Mammary epithelial cell (primary cell): ENCODE measurements at regions of chr22 and their contacts with region 1.

Region 1: DNA sequence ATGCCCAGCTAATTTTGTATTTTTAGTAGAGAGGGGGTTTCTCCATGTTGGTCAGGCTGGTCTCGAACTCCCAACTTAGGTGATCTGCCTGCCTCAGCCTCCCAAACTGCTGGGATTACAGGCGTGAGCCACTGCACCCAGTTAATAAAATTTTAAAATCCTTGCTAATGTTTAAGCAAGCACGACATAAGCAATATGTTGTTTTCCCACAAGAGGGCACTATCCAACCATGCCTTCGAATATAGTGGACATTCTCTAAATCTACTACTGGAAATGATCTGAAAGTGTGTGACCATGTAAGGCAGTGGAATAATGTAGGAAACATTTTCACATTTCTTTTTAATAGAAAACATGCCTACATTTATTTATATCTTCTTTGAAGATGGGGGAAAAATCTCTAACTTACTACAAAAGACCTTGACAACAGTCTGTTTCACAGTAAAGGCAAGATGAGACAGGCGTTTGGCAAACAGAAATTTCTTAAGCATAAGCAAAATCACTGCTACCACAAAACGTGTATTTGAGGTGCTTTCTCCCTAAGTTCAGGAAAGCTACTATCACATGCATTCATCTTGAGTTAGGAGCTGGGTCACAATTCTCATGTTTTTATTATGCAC is 38.2 kb downstream of the PITPNB start:
- DNase-seq: peak; percentile 54
- H3K4me3 ChIP-seq: no peak overlapping the region
- H3K27ac ChIP-seq: no peak overlapping the region
- H3K4me1 ChIP-seq: peaks cover 24% of the 10 kb centered on the region
- H3K27me3 ChIP-seq: no peaks in the 10 kb centered on the region
- CTCF ChIP-seq: peak; percentile 68 to 73

Region 2: DNA sequence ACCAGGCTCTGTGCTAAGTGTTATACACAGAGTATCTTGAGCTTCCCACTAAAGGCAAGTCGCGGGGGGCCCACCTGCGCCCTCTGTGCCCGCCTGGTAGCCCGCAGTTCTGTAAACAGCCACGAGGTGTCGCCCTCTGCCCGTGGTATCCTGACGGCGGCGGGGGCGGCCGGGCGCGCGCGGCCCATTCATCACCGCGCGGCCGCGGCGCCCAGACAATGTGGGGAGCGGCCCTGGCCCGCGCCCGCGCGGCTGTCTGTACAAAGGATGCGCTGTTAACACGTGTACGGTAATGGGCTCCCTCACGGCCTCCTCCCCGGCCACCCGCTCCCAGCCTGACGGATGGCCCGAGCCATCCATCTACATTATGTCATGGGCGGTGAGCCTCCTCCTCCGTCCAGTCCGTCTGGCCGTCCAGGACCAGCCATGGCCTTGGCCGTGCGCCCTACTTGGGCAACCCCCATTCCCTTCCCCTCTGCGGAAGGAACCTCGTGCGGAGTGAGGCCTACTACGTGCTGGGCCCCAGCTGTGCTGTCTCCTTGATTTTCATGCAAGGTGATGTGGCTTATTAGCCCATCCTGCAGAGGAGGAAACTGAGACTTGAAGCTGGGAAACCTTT is 1124.1 kb before region 1 on chr22:
- CTCF ChIA-PET with region 1: no interaction called
- dilution Hi-C with region 1: no loop called
- in situ Hi-C with region 1: no loop called
- intact Hi-C with region 1: loop called (anchors 1 kb)
- DNase-seq: peak; percentile 36
- H3K4me3 ChIP-seq: peak overlapping the region in 1 of 3 experiments; percentile 36
- H3K27ac ChIP-seq: no peak overlapping the region
- H3K4me1 ChIP-seq: peaks cover 3% of the 10 kb centered on the region
- H3K27me3 ChIP-seq: no peaks in the 10 kb centered on the region
- CTCF ChIP-seq: peak; percentile 48 to 72

Region 3: GRCh38 chr22:27588268-27588667 is 292.6 kb before region 1 on chr22:
- CTCF ChIA-PET with region 1: no interaction called
- dilution Hi-C with region 1: no loop called
- in situ Hi-C with region 1: no loop called
- intact Hi-C with region 1: no loop called
- DNase-seq: no peak
- H3K4me3 ChIP-seq: no peak overlapping the region
- H3K27ac ChIP-seq: no peak overlapping the region
- H3K4me1 ChIP-seq: peaks cover 3% of the 10 kb centered on the region
- H3K27me3 ChIP-seq: no peaks in the 10 kb centered on the region
- CTCF ChIP-seq: no peak

Region 4: GRCh38 chr22:27718186-27719032 is 162.5 kb before region 1 on chr22:
- CTCF ChIA-PET with region 1: no interaction called
- dilution Hi-C with region 1: no loop called
- in situ Hi-C with region 1: no loop called
- intact Hi-C with region 1: loop called (anchors 5 kb)
- DNase-seq: peak; percentile 96
- H3K4me3 ChIP-seq: no peak overlapping the region
- H3K27ac ChIP-seq: peak overlapping the region; percentile 84
- H3K4me1 ChIP-seq: peaks cover 36% of the 10 kb centered on the region
- H3K27me3 ChIP-seq: no peaks in the 10 kb centered on the region
- CTCF ChIP-seq: no peak

Region 5: DNA sequence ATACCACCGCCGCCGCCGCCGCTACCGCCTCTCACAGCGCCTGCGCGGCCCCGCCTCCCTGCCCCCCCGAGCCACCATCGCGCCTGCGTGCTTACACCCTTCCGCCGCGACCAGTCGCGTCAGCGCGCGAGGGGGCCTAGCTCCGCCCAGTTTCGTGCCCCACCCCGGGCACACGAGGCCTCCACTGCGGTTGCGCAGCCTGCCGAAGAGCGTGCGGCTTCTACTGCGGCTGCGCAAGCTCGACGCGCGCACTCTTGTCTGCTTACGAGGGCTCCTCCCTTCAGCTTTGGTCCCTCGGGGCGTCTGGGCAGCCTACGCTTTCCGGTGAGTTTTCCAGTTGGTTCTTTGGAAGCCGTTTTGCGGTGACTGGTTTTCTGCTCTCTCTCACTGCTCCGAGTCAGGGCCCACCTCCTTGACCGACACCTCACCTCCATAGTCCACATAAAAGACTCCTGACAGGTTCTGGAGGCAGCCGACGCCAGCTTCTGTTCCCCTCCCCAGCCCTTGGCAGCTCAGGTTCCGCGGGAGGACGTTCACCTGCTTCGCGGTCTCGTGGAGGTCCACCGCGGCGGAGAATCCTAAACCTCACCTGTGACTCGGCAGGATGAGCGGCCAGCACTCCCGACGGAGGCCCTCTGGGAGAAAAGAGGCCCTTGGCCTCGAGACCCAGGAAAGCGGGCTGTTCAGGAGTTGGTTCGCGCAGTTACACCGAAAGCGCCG is 38.5 kb after region 1 on chr22 and contains the start of gene PITPNB:
- CTCF ChIA-PET with region 1: no interaction called
- dilution Hi-C with region 1: no loop called
- in situ Hi-C with region 1: no loop called
- intact Hi-C with region 1: loop called (anchors 5 kb)
- DNase-seq: peak; percentile 98
- H3K4me3 ChIP-seq: peak within 1 kb of the TSS; percentile 79 to 90 (median 83)
- H3K27ac ChIP-seq: peak within 1 kb of the TSS; percentile 87
- H3K4me1 ChIP-seq: peaks cover 20% of the 10 kb centered on the region
- H3K27me3 ChIP-seq: no peaks in the 10 kb centered on the region
- CTCF ChIP-seq: no peak
- total RNA-seq, gene PITPNB: 33.5 to 125 TPM

Region 6: DNA sequence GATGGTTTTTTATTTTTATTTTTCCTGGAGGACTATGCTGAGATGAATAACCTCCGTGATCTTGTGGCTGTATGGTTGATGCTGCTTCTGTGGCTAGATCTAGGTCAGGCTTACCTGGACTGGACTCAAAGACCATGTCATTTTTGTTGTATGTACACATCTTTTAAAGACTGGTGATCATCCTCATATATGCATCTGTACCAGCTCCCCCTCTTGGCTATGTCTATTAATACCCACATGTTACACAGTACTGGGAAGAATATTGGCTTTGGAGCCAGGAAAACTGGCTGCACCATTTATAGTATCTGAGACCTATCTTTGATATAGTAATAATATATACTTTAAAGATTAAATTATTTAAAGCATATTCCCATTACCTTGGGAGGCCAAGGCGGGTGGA is 56.6 kb after region 1 on chr22:
- CTCF ChIA-PET with region 1: no interaction called
- dilution Hi-C with region 1: no loop called
- in situ Hi-C with region 1: no loop called
- intact Hi-C with region 1: loop called (anchors 1 kb)
- DNase-seq: no peak
- H3K4me3 ChIP-seq: no peak overlapping the region
- H3K27ac ChIP-seq: no peak overlapping the region
- H3K4me1 ChIP-seq: no peaks in the 10 kb centered on the region
- H3K27me3 ChIP-seq: no peaks in the 10 kb centered on the region
- CTCF ChIP-seq: peak; percentile 14 to 39

Region 7: GRCh38 chr22:28009272-28009827 is 128.5 kb after region 1 on chr22:
- CTCF ChIA-PET with region 1: no interaction called
- dilution Hi-C with region 1: no loop called
- in situ Hi-C with region 1: loop called (anchors 5 kb)
- intact Hi-C with region 1: loop called (anchors 1 kb)
- DNase-seq: peak; percentile 54
- H3K4me3 ChIP-seq: no peak overlapping the region
- H3K27ac ChIP-seq: no peak overlapping the region
- H3K4me1 ChIP-seq: peaks cover 3% of the 10 kb centered on the region
- H3K27me3 ChIP-seq: no peaks in the 10 kb centered on the region
- CTCF ChIP-seq: peak; percentile 93 to 98

Region 8: GRCh38 chr22:29163808-29164207 is 1282.9 kb after region 1 on chr22:
- CTCF ChIA-PET with region 1: no interaction called
- dilution Hi-C with region 1: no loop called
- in situ Hi-C with region 1: no loop called
- intact Hi-C with region 1: loop called (anchors 5 kb)
- DNase-seq: no peak
- H3K4me3 ChIP-seq: no peak overlapping the region
- H3K27ac ChIP-seq: no peak overlapping the region
- H3K4me1 ChIP-seq: no peaks in the 10 kb centered on the region
- H3K27me3 ChIP-seq: no peaks in the 10 kb centered on the region
- CTCF ChIP-seq: no peak